ENCODE measurements at regions of chr20 and their contacts with region 1.

Region 1: GRCh38 chr20:49942942-49943341 is 6.7 kb downstream of the RNF114 start:
- DNase-seq: no peak
- ATAC-seq: no peak
- H3K4me3 ChIP-seq: no peak overlapping the region
- H3K4me3 Mint-ChIP-seq: no peak overlapping the region
- H3K27ac ChIP-seq: no peak overlapping the region
- H3K27ac Mint-ChIP-seq: no peak overlapping the region
- H3K4me1 ChIP-seq: peaks cover 4 to 17% of the 10 kb centered on the region in 2 experiments
- H3K4me1 Mint-ChIP-seq: peaks cover 42 to 51% (median 51%) of the 10 kb centered on the region in 3 donors
- H3K27me3 ChIP-seq: no peaks in the 10 kb centered on the region
- H3K27me3 Mint-ChIP-seq: no peaks in the 10 kb centered on the region

Region 2: GRCh38 chr20:49821870-49822331 is 121.0 kb before region 1 on chr20:
- CTCF ChIA-PET with region 1: no interaction called
- POLR2A ChIA-PET with region 1: interaction called in 1 of 2 experiments, 10 read pairs
- DNase-seq: no peak
- ATAC-seq: no peak
- H3K4me3 ChIP-seq: no peak overlapping the region
- H3K4me3 Mint-ChIP-seq: peak overlapping the region in 1 of 3 donors; percentile 42
- H3K27ac ChIP-seq: peak overlapping the region; percentile 10
- H3K27ac Mint-ChIP-seq: peak overlapping the region; percentile 52 to 66
- H3K4me1 ChIP-seq: peaks cover 20 to 34% of the 10 kb centered on the region in 2 experiments
- H3K4me1 Mint-ChIP-seq: peaks cover 45 to 56% (median 53%) of the 10 kb centered on the region in 3 donors
- H3K27me3 ChIP-seq: no peaks in the 10 kb centered on the region
- H3K27me3 Mint-ChIP-seq: no peaks in the 10 kb centered on the region

Measured in T-cell (primary cell).